Mammary epithelial cell (primary cell): ENCODE measurements at regions of chr13 and their contacts with region 1.

Region 1: GRCh38 chr13:26698392-26699196 is 62.0 kb downstream of the GPR12 start:
- DNase-seq: peak; percentile 69
- H3K4me3 ChIP-seq: no peak overlapping the region
- H3K27ac ChIP-seq: no peak overlapping the region
- H3K4me1 ChIP-seq: peaks cover 3% of the 10 kb centered on the region
- H3K27me3 ChIP-seq: no peaks in the 10 kb centered on the region
- CTCF ChIP-seq: peak; percentile 88 to 95

Region 2: GRCh38 chr13:26074706-26075105 is 623.9 kb before region 1 on chr13:
- CTCF ChIA-PET with region 1: interaction called, 4 read pairs
- dilution Hi-C with region 1: no loop called
- in situ Hi-C with region 1: no loop called
- intact Hi-C with region 1: loop called (anchors 10 kb)
- DNase-seq: peak; percentile 31
- H3K4me3 ChIP-seq: peak overlapping the region in 2 of 3 experiments; percentile 15 to 21
- H3K27ac ChIP-seq: no peak overlapping the region
- H3K4me1 ChIP-seq: peaks cover 13% of the 10 kb centered on the region
- H3K27me3 ChIP-seq: no peaks in the 10 kb centered on the region
- CTCF ChIP-seq: peak in 1 of 2 donors; percentile 29

Region 3: DNA sequence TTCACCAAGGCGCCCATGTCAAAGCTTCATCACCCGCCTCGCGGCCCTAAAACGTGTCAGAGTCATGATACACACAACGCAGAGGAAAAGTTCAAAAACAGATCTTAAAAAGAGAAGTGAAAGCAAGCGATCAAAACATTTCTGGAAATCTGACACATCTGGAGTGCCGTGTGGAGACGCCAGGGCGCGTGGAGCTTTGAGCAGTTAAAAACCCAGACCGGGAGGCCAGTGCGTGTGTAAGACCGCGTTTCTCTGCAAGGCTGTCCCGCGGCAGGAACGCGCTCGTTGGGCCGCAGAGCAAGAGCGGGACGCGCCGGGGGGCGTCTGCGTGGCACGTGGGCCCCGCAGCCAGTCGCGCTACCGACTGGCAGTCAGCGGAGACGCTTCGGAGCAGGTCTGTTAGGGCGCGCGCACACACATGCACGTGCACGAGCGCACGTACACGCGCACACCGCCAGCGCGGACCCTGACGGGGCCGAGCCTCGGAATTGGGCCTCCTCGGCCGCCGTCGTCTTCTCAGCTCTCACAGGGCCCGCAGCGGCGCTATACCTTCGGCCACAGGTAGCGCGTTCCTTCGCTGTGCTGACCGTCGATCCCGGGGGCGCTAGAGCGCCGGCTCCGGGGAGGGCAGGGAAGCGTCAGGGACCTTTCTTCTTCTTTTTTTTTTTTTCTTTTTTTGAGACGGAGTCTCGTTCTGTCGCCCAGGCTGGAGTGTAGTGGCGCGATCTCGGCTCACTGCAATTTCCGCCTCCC is 512.3 kb before region 1 on chr13:
- CTCF ChIA-PET with region 1: interaction called, 49 read pairs
- dilution Hi-C with region 1: loop called (anchors 5 kb)
- in situ Hi-C with region 1: loop called (anchors 5 to 10 kb)
- intact Hi-C with region 1: loop called (anchors 1 kb)
- DNase-seq: peak; percentile 92
- H3K4me3 ChIP-seq: peak overlapping the region; percentile 58 to 69 (median 63)
- H3K27ac ChIP-seq: no peak overlapping the region
- H3K4me1 ChIP-seq: peaks cover 10% of the 10 kb centered on the region
- H3K27me3 ChIP-seq: no peaks in the 10 kb centered on the region
- CTCF ChIP-seq: peak; percentile 34 to 76

Region 4: GRCh38 chr13:26482451-26483197 is 216.0 kb before region 1 on chr13:
- CTCF ChIA-PET with region 1: no interaction called
- dilution Hi-C with region 1: no loop called
- in situ Hi-C with region 1: loop called in 1 of 2 experiments (anchors 5 kb)
- intact Hi-C with region 1: loop called (anchors 1 kb)
- DNase-seq: peak; percentile 57
- H3K4me3 ChIP-seq: no peak overlapping the region
- H3K27ac ChIP-seq: no peak overlapping the region
- H3K4me1 ChIP-seq: no peaks in the 10 kb centered on the region
- H3K27me3 ChIP-seq: no peaks in the 10 kb centered on the region
- CTCF ChIP-seq: peak; percentile 84 to 88

Region 5: DNA sequence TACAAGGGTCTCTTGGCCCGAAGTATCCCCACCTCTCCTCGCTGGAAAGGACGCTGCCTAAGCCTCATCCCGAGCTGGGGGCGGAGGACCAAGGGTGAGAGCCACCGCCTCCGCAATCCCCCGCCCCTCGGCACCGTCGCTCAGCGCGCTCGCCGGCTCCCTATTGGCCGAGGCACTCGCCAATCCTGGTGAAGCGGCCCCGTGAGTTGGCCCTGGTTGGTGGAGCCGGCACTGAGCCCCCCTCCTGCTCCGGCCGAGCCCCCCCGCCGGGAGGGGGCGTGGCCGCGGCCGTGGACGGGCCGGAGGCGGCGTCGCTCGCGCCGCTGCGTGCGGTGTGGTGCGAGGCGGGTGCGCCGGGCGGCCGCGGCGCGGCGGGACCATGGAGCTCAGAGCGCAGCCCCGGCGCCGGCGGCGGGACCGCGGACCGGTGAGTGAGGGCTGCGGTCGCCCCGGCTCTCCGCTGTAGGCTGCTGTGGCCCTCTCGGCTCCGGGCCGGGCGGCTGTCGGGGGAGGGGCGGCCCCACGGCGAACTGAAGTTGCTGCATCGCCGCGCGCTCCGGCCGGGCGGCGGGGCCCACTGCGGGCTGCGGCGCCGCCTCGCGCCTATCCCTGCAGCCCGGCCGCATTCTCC is 141.1 kb before region 1 on chr13 and contains the start of gene WASF3:
- CTCF ChIA-PET with region 1: no interaction called
- dilution Hi-C with region 1: no loop called
- in situ Hi-C with region 1: no loop called
- intact Hi-C with region 1: loop called (anchors 5 kb)
- DNase-seq: peak; percentile 92
- H3K4me3 ChIP-seq: peak within 1 kb of the TSS; percentile 68 to 79 (median 74)
- H3K27ac ChIP-seq: no peak within 1 kb of the TSS
- H3K4me1 ChIP-seq: no peaks in the 10 kb centered on the region
- H3K27me3 ChIP-seq: no peaks in the 10 kb centered on the region
- CTCF ChIP-seq: no peak
- total RNA-seq, gene WASF3: 7.7 to 19.4 TPM